Lower lobe of right lung (tissue), 2 donors: ENCODE measurements at regions of chr5 and their contacts with region 1.

Region 1: GRCh38 chr5:174311531-174312269 is 266.2 kb downstream of the NSG2 start:
- DNase-seq: peak; percentile 71
- ATAC-seq: peak; percentile 76 to 89
- H3K4me3 ChIP-seq: peak overlapping the region; percentile 47
- H3K27ac ChIP-seq: no peak overlapping the region
- H3K4me1 ChIP-seq: peaks cover 9% of the 10 kb centered on the region
- H3K27me3 ChIP-seq: peaks cover 19% of the 10 kb centered on the region
- CTCF ChIP-seq: peak; percentile 90

Region 2: DNA sequence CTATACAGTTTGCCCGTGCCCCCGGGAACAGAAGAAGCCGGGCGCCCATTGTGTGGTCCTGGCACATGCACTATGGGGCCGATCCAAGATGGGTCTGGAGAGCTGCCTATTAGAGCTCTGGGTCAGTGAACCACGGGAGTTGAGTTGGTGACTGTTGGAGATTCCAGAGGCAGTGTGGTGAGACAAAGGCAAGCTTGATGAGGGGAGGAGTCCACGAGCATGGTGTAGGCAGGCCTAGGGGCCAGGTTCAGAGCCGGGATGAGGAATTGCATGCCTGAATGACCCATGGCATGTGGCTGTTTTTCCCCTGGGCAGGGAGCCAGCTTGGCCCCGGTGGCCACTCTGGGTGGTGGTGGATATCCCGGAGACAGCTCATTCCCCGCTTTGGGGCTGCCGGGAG is 899.1 kb before region 1 on chr5:
- intact Hi-C with region 1: no loop called
- DNase-seq: no peak
- ATAC-seq: peak in 1 of 2 donors; percentile 17
- H3K4me3 ChIP-seq: no peak overlapping the region
- H3K27ac ChIP-seq: no peak overlapping the region
- H3K4me1 ChIP-seq: no peaks in the 10 kb centered on the region
- H3K27me3 ChIP-seq: no peaks in the 10 kb centered on the region
- CTCF ChIP-seq: no peak

Region 3: GRCh38 chr5:174045470-174046025 is 266.2 kb before region 1 on chr5 and contains the start of gene NSG2:
- intact Hi-C with region 1: loop called (anchors 10 kb)
- DNase-seq: peak; percentile 75
- ATAC-seq: peak; percentile 81 to 94
- H3K4me3 ChIP-seq: no peak within 1 kb of the TSS
- H3K27ac ChIP-seq: no peak within 1 kb of the TSS
- H3K4me1 ChIP-seq: no peaks in the 10 kb centered on the region
- H3K27me3 ChIP-seq: peaks cover 12% of the 10 kb centered on the region
- CTCF ChIP-seq: peak; percentile 48
- total RNA-seq, gene NSG2: not detected

Region 4: GRCh38 chr5:174453696-174454095 is 142.0 kb after region 1 on chr5:
- intact Hi-C with region 1: no loop called
- DNase-seq: no peak
- ATAC-seq: no peak
- H3K4me3 ChIP-seq: no peak overlapping the region
- H3K27ac ChIP-seq: no peak overlapping the region
- H3K4me1 ChIP-seq: no peaks in the 10 kb centered on the region
- H3K27me3 ChIP-seq: no peaks in the 10 kb centered on the region
- CTCF ChIP-seq: no peak